Caco-2 (cell line): ENCODE measurements at regions of chr10 and their contacts with region 1.

Region 1: DNA sequence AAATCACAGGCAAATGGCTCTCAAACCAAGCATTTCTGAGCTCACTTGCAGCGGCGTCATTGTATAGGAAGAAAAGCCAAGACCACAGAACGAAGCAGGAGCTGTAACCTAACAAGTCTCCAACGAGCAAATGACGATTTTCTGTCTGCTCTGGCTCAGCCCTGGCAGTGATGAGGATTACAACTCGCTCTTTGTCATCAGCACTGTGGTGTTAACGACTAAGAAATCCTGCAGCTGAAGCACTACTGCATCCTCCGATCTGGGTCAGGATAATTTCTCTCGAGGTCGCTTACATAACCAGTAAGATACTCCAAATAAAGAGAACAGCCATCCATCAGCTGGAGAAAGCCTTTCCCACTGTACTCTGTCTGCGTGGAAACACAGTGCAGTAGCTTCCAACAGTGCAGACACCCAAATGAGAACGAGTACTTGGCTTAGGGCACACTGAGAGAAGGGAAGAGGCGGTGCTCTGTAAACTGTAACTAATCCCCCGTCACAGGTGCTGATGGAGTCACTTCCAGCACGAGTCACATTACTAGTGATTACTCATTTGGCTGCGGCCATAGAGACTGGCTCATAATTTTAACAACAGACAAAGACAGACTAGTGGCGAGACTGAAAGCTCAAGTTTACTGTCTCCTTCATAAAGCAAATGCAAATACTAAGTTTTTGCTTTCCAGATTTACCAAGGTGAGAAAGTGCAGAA is 135.8 kb downstream of the NRBF2 start:
- DNase-seq: peak; percentile 90
- H3K4me3 ChIP-seq: peak overlapping the region; percentile 54
- H3K4me3 Mint-ChIP-seq: peak overlapping the region; percentile 97
- H3K27ac Mint-ChIP-seq: peak overlapping the region; percentile 98
- H3K4me1 ChIP-seq: peaks cover 19% of the 10 kb centered on the region
- H3K4me1 Mint-ChIP-seq: peaks cover 28% of the 10 kb centered on the region
- H3K27me3 ChIP-seq: no peaks in the 10 kb centered on the region
- H3K27me3 Mint-ChIP-seq: no peaks in the 10 kb centered on the region
- CTCF ChIP-seq: peak; percentile 39 to 51

Region 2: GRCh38 chr10:63217120-63217605 is 51.8 kb before region 1 on chr10:
- CTCF ChIA-PET with region 1: no interaction called
- POLR2A ChIA-PET with region 1: interaction called, 3 read pairs
- intact Hi-C with region 1: loop called (anchors 1 kb)
- DNase-seq: peak in 1 of 2 experiments; percentile 64
- H3K4me3 ChIP-seq: no peak overlapping the region
- H3K4me3 Mint-ChIP-seq: no peak overlapping the region
- H3K27ac Mint-ChIP-seq: no peak overlapping the region
- H3K4me1 ChIP-seq: no peaks in the 10 kb centered on the region; the same call in 1 of the 2 replicates
- H3K4me1 Mint-ChIP-seq: no peaks in the 10 kb centered on the region
- H3K27me3 ChIP-seq: no peaks in the 10 kb centered on the region
- H3K27me3 Mint-ChIP-seq: no peaks in the 10 kb centered on the region
- CTCF ChIP-seq: peak; percentile 74 to 78

Region 3: GRCh38 chr10:63365976-63366765 is 97.2 kb after region 1 on chr10:
- CTCF ChIA-PET with region 1: no interaction called
- POLR2A ChIA-PET with region 1: no interaction called
- intact Hi-C with region 1: loop called (anchors 2 kb)
- DNase-seq: peak in 1 of 2 experiments; percentile 44
- H3K4me3 ChIP-seq: no peak overlapping the region
- H3K4me3 Mint-ChIP-seq: no peak overlapping the region
- H3K27ac Mint-ChIP-seq: peak overlapping the region; percentile 21
- H3K4me1 ChIP-seq: peaks cover 36% of the 10 kb centered on the region
- H3K4me1 Mint-ChIP-seq: peaks cover 42% of the 10 kb centered on the region
- H3K27me3 ChIP-seq: no peaks in the 10 kb centered on the region
- H3K27me3 Mint-ChIP-seq: no peaks in the 10 kb centered on the region
- CTCF ChIP-seq: no peak

Region 4: GRCh38 chr10:63521416-63522276 is 252.7 kb after region 1 on chr10:
- CTCF ChIA-PET with region 1: no interaction called
- POLR2A ChIA-PET with region 1: no interaction called
- intact Hi-C with region 1: loop called (anchors 2 kb)
- DNase-seq: peak; percentile 79 to 86
- H3K4me3 ChIP-seq: peak overlapping the region; percentile 96
- H3K4me3 Mint-ChIP-seq: peak overlapping the region; percentile 83
- H3K27ac Mint-ChIP-seq: peak overlapping the region; percentile 92
- H3K4me1 ChIP-seq: peaks cover 17% of the 10 kb centered on the region
- H3K4me1 Mint-ChIP-seq: peaks cover 43% of the 10 kb centered on the region
- H3K27me3 ChIP-seq: no peaks in the 10 kb centered on the region
- H3K27me3 Mint-ChIP-seq: no peaks in the 10 kb centered on the region
- CTCF ChIP-seq: no peak

Region 5: DNA sequence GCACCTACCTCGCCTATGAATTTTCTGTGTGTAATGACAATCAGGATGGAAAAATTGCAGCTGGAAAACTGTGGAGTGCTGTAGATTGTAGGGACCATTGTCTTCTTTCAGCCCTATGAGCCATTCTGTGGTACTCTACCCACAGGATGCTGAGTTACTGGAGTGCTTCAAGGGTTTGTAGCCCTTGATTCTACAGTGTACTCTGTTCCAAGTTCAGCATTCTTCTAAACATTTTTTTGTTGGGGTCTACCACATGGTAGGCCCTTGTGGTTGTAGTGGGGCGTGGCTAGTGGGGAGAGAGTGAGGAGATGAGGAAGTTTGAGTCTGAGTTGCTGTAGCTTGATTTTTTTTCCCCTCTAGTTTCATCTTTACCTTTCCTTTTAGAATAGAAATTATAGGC is 285.7 kb after region 1 on chr10:
- CTCF ChIA-PET with region 1: no interaction called
- POLR2A ChIA-PET with region 1: no interaction called
- intact Hi-C with region 1: no loop called
- DNase-seq: no peak
- H3K4me3 ChIP-seq: no peak overlapping the region
- H3K4me3 Mint-ChIP-seq: no peak overlapping the region
- H3K27ac Mint-ChIP-seq: no peak overlapping the region
- H3K4me1 ChIP-seq: peaks cover 11% of the 10 kb centered on the region
- H3K4me1 Mint-ChIP-seq: peaks cover 10% of the 10 kb centered on the region
- H3K27me3 ChIP-seq: no peaks in the 10 kb centered on the region
- H3K27me3 Mint-ChIP-seq: no peaks in the 10 kb centered on the region
- CTCF ChIP-seq: no peak

Region 6: DNA sequence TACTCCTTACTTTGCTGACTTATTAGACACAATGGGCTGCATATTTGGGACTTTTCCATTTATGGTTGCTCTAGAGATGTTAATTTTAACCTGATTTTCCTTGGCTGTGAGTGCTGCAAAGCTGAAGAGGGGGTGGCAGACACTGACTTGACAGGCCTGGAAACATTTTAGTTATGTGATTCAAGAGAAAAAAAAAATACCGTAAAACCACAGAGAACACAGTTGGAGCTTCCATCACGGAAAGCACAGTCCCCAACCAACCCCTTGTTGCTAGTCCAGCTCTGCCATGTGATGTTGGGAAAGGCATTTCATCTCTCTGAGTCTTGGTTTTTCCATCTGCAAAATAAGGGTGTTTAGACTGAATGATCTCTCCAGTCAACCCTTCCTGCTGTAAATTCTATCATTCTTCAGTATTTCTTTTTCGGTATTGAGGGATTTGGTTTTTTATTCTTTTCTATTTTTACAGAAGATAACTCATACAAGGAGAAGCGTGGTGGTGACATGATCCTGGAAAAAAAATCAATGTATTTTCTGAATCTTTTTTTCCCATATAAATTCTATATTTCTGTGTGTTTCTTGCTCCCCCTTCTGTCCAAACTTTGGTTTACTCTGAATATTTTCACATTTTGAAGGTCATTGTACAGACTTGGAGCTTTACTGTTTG is 498.3 kb after region 1 on chr10:
- CTCF ChIA-PET with region 1: no interaction called
- POLR2A ChIA-PET with region 1: no interaction called
- intact Hi-C with region 1: loop called (anchors 5 kb)
- DNase-seq: peak in 1 of 2 experiments; percentile 36
- H3K4me3 ChIP-seq: no peak overlapping the region
- H3K4me3 Mint-ChIP-seq: no peak overlapping the region
- H3K27ac Mint-ChIP-seq: no peak overlapping the region
- H3K4me1 ChIP-seq: peaks cover 20% of the 10 kb centered on the region
- H3K4me1 Mint-ChIP-seq: peaks cover 32% of the 10 kb centered on the region
- H3K27me3 ChIP-seq: no peaks in the 10 kb centered on the region
- H3K27me3 Mint-ChIP-seq: no peaks in the 10 kb centered on the region
- CTCF ChIP-seq: peak; percentile 51 to 65